HepG2 (cell line): ENCODE measurements at regions of chr1 and their contacts with region 1.

Region 1: DNA sequence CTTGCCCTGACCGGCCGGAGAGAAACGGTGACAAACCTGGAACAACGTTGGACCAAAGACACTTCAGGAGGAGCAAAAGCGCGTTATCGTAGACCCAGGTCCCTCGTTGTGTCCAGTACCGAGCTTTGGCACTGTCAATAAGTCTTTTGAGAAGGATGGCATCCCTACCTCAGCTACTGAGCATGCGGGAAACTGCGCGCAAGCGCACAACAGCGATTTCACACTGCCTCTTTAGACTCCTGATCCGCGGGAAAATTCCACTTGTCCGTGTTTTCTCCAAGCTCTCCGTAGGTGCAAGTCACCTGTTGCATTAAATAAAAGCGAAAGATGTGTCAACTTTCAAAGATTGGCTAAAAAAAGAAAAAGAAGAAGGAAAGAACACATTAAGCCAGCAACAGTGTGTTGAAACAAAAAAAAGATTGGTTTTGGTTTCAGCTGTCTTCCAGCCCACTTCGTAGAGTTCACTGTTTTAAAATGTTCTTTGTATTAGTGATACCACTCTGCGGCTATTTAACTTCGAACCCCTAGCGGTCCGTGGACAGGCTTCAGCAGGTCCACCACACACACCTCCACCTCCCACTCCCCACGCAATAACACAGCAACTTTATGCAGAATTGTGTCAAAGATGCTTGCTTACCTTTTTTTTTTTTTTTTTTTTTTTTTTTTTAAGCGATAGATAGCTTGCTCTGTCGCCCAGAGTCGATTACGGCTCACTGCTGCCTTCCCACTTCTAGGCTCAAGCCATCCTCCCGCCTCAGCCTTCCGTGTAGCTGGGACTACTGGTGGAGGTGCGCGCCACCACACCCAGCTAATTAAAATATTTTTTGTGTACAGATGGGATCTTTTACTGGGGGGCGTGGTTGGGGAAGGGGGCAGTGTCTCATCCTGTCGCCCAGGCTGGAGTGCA is at the start of gene BPNT1:
- DNase-seq: peak; percentile 94
- ATAC-seq: peak; percentile 78
- H3K4me3 ChIP-seq: peak within 1 kb of the TSS; percentile 80 to 98 (median 84)
- H3K27ac ChIP-seq: peak within 1 kb of the TSS; percentile 58
- H3K4me1 ChIP-seq: peaks cover 26% of the 10 kb centered on the region
- H3K27me3 ChIP-seq: no peaks in the 10 kb centered on the region; a peak in 1 of 5 replicates
- CTCF ChIP-seq: no peak
- EP300 ChIP-seq: no peak
- POLR2A ChIP-seq: peak; percentile 78 to 94
- RAD21 ChIP-seq: no peak
- total RNA-seq, gene BPNT1: 43.9 and 68.2 TPM in 2 replicates

Region 2: GRCh38 chr1:219883400-219884332 is 206.2 kb before region 1 on chr1:
- CTCF ChIA-PET with region 1: no interaction called
- POLR2A ChIA-PET with region 1: interaction called, 3 read pairs
- in situ Hi-C with region 1: no loop called
- intact Hi-C with region 1: loop called (anchors 2 kb)
- DNase-seq: peak; percentile 76
- ATAC-seq: peak; percentile 100
- H3K4me3 ChIP-seq: peak overlapping the region in 2 of 3 experiments; percentile 4 to 14; a peak in 3 of 6 replicates
- H3K27ac ChIP-seq: peak overlapping the region; percentile 75
- H3K4me1 ChIP-seq: peaks cover 48% of the 10 kb centered on the region
- H3K27me3 ChIP-seq: no peaks in the 10 kb centered on the region
- CTCF ChIP-seq: no peak
- EP300 ChIP-seq: peak in 1 of 2 experiments; percentile 86; a peak in 2 of 4 replicates
- POLR2A ChIP-seq: no peak
- RAD21 ChIP-seq: 0 out of 2 replicates have a peak, but pooled peaks have one; percentile 26

Region 3: GRCh38 chr1:220046052-220046930 is 43.6 kb before region 1 on chr1 and contains the start of gene EPRS1:
- CTCF ChIA-PET with region 1: no interaction called
- POLR2A ChIA-PET with region 1: interaction called, 9 read pairs
- in situ Hi-C with region 1: loop called (anchors 5 kb)
- intact Hi-C with region 1: loop called (anchors 1 kb)
- DNase-seq: peak; percentile 93
- ATAC-seq: peak; percentile 97
- H3K4me3 ChIP-seq: peak within 1 kb of the TSS; percentile 94 to 96 (median 96)
- H3K27ac ChIP-seq: peak within 1 kb of the TSS; percentile 78
- H3K4me1 ChIP-seq: peaks cover 22% of the 10 kb centered on the region
- H3K27me3 ChIP-seq: no peaks in the 10 kb centered on the region
- CTCF ChIP-seq: peak; percentile 87
- EP300 ChIP-seq: no peak
- POLR2A ChIP-seq: peak; percentile 74 to 92
- RAD21 ChIP-seq: peak; percentile 44; the same call in 1 of the 2 replicates
- total RNA-seq, gene EPRS1: 124 and 194 TPM in 2 replicates